ENCODE measurements at regions of chr16 and their contacts with region 1.

Region 1: DNA sequence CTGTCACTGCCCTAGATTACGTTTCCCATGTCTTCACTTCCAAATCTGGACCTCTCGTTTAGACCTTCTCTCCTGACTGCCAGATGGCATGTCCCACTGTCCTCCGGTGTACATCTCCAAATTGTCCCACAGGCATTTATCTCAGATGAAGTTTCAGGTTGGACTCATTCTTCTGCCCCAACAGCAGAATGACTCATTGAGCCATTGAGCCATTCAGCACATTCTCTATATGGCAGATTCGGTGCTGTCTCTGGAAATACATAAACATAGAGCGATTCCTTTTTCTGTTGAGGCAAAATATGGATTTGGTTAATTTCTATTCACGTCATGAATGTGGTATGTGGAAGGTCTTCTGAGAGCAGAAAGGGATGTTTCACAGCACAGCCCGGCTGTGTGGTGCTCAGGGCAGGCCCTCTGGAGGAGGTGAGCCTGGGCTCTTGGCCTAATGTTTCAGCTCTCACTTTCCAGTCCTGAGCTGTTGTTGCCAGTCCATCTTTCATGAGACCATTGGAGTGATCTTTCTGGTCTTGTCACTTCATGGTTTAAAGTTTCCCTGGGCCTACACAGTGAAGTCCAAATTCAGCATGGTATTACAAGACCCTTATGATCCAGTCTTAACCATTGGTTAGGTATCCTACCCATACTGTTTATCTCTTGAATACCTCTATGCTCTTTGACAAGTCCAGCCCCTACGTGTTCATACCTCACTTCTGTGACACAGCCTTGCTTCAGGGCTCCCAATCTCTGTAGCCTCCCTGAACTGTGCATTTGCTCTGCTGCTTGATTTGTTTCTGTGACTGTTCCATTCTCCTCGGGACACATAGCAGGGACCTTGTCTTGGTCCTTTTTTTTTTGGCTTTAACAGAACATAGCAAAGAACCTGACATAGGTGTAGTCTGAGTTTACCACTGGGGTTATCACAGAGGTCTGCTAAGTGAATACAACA is 15.9 kb downstream of the HAPSTR1 start:
- DNase-seq: no peak
- ATAC-seq: 0 out of 2 replicates have a peak, but pooled peaks have one; percentile 39
- H3K4me3 ChIP-seq: no peak overlapping the region
- H3K27ac ChIP-seq: no peak overlapping the region
- H3K4me1 ChIP-seq: peaks cover 22% of the 10 kb centered on the region
- H3K27me3 ChIP-seq: no peaks in the 10 kb centered on the region
- CTCF ChIP-seq: no peak

Region 2: GRCh38 chr16:8949541-8950418 is 157.5 kb before region 1 on chr16:
- CTCF ChIA-PET with region 1: interaction called, 11 read pairs
- POLR2A ChIA-PET with region 1: no interaction called
- in situ Hi-C with region 1: no loop called
- intact Hi-C with region 1: no loop called
- DNase-seq: no peak
- ATAC-seq: no peak
- H3K4me3 ChIP-seq: no peak overlapping the region
- H3K27ac ChIP-seq: no peak overlapping the region
- H3K4me1 ChIP-seq: peaks cover 48% of the 10 kb centered on the region
- H3K27me3 ChIP-seq: no peaks in the 10 kb centered on the region
- CTCF ChIP-seq: no peak

Region 3: DNA sequence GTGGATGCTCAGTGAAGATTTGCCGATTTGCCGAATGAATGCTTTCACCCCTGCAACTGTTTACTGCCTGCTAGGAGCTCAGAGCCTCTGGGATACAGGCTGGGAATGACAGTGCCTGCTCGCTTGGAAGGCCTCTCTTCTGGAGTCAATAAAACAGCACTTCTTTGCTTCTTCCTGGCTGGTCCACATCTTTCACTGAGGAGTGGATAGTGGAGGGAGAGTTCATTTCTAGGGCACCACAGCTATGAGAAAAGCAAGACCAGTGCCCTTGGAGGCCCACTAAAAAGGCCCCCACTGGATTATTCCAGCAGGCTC is 140.5 kb before region 1 on chr16:
- CTCF ChIA-PET with region 1: interaction called, 10 read pairs
- POLR2A ChIA-PET with region 1: no interaction called
- in situ Hi-C with region 1: no loop called
- intact Hi-C with region 1: no loop called
- DNase-seq: no peak
- ATAC-seq: no peak
- H3K4me3 ChIP-seq: no peak overlapping the region
- H3K27ac ChIP-seq: no peak overlapping the region
- H3K4me1 ChIP-seq: 0 out of 2 replicates have a peak, but pooled peaks cover 4% of the 10 kb centered on the region
- H3K27me3 ChIP-seq: no peaks in the 10 kb centered on the region
- CTCF ChIP-seq: no peak

Measured in Panc1 (cell line).